Left cardiac atrium (tissue), 4 donors: ENCODE measurements at regions of chr15 and their contacts with region 1.

Region 1: DNA sequence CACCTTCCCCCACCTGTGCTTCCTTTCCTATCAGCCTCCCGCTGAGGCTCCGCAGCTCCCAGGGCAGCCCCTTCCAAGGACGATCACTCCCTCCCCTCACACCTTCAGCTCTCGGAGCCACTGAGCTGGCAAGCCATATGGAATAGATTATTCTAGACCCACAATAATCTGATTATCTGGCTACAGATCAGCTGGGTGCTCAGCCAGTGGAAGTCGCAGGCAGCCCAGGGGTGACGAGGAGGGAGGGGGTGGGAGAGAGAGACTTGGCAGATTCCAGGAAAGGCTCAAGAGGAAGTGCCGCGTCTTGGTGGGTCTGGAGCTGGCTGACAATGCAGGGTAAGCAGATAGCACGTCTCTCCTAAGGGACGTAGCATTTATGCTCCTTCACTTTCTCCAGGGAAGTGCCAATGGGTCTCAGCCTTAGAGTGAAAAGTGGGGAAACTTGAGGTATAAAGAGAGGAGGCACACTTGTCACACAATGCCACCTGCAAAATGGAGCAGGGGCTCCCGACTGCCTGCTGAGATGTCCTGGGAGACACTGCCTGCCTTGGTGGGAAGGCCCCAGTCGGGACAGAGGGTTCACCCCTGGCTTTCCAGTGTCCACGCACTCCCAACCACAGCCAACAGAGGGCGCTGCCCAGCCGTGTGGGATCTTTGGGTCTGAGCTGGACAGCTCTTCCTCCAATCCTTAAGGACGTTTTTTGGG is 9.4 kb upstream of the MESP1 start:
- DNase-seq: peak; percentile 77
- ATAC-seq: peak; percentile 91 to 93

Region 2: DNA sequence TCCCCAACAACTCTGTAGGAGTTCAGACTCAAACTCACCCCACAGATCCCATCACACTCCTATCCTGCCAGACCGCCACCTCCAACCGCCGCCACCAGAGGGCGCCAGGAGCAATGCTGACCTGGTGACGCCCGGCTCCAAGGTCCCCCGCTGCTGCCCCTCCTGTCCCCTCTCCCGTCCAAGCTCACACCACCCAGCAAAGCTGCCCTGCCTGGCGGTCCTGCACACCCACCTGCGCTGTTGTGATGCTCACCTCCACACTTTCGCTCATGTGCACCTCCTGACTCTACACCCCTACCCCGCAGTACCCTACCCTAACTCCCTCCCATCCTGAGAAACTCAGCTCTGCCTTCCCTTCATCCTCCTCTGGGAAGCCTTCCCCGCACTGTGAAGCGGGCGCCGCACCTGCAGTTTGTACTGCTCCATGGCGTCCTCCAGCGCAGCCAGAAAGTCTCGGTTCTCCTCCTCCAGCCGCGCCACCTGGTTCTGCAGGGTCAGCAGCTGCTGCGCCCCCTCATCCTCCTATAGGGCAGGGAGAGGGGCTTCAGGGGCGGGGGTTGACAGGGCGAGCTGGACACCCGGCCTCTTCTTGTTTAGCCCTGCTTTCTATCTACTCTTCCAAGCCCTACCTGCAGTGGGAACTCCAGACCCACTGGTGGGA is 113.1 kb before region 1 on chr15:
- intact Hi-C with region 1: no loop called
- DNase-seq: peak; percentile 80
- ATAC-seq: peak; percentile 68 to 80

Region 3: GRCh38 chr15:89836255-89837133 is 76.0 kb after region 1 on chr15:
- intact Hi-C with region 1: loop called in 1 of 2 experiments (anchors 10 kb)
- DNase-seq: no peak
- ATAC-seq: peak; percentile 87 to 88

Region 4: GRCh38 chr15:89874926-89875564 is 114.6 kb after region 1 on chr15:
- intact Hi-C with region 1: loop called (anchors 2 to 5 kb)
- DNase-seq: peak; percentile 86
- ATAC-seq: peak; percentile 91 to 96

Region 5: DNA sequence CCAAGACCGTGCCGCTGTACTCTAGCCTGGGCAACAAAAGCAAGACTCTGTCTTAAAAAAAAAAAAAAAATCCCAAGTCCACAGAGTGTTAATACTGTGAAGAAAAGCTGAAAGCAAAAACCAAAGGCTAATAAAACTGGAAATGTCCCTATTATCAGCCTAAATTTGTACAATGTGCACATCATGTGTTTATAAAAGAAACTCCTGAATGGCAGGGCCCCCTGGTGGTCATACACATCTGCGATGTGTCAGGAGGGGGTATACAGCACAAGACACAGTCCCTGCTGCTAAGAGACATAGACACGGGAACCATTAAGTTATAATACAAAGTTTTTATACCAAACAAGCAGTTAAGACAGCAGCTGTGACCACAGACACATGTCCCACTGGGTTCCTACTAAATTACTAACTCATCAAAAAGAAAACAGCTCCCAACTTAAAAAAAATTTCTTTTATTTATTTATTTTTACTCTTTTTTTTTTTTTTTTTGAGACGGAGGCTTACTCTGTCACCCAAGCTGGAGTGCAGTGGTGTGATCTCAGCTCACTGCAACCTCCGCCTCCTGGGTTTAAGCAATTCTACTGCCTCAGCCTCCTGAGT is 310.9 kb after region 1 on chr15:
- intact Hi-C with region 1: loop called (anchors 5 to 10 kb)
- DNase-seq: peak; percentile 90
- ATAC-seq: peak; percentile 70 to 81